ENCODE measurements at regions of chr1 and their contacts with region 1.

Region 1: GRCh38 chr1:167687919-167688519 is 33.8 kb upstream of the MPZL1 start:
- DNase-seq: peak in 1 of 3 donors; percentile 71
- ATAC-seq: peak; percentile 74 to 89 (median 86)
- H3K4me3 ChIP-seq: no peak overlapping the region
- H3K27ac ChIP-seq: no peak overlapping the region
- H3K4me1 ChIP-seq: no peaks in the 10 kb centered on the region
- H3K27me3 ChIP-seq: no peaks in the 10 kb centered on the region
- CTCF ChIP-seq: peak; percentile 84 to 91 (median 89)
- POLR2A ChIP-seq: no peak

Region 2: DNA sequence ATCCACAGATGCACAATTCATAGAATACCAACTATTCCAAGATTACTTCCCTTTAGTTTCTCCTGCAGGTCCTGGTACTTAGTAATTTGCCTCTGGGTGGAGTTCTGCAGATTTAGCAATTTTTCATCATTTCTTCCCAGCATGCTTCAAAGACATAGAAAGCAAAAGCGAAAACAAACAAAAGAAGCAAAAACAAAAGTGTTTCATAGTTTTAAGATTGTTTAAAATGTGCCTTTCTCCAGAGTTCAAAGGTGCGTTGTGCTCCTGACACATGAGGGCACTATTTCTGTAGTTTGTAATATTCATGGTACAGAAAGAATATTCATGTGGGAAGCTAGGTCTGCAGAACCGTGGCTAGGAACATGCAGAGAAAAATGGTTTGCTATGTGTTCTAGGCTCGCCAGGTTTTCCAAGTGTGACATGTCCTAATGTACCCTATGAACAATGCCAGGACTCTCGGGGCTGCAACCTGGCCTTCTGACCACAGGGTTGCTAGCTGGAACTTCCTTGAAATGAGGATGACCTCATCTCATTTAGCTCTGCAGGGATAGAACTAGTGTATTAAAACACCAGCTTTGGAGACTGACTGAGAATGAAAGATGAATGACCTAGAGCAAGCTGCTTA is 88.0 kb before region 1 on chr1:
- intact Hi-C with region 1: loop called in 1 of 2 experiments (anchors 10 kb)
- DNase-seq: peak; percentile 57 to 68 (median 67)
- ATAC-seq: peak; percentile 80 to 97 (median 88)
- H3K4me3 ChIP-seq: no peak overlapping the region
- H3K27ac ChIP-seq: peak overlapping the region in 2 of 3 donors; percentile 5 to 10
- H3K4me1 ChIP-seq: peaks cover 0 to 21% (median 10%) of the 10 kb centered on the region in 4 donors
- H3K27me3 ChIP-seq: no peaks in the 10 kb centered on the region
- CTCF ChIP-seq: peak; percentile 34 to 52 (median 46)
- POLR2A ChIP-seq: no peak

Measured in right lobe of liver (tissue), 6 donors.